Panc1 (cell line): ENCODE measurements at regions of chr19 and their contacts with region 1.

Region 1: DNA sequence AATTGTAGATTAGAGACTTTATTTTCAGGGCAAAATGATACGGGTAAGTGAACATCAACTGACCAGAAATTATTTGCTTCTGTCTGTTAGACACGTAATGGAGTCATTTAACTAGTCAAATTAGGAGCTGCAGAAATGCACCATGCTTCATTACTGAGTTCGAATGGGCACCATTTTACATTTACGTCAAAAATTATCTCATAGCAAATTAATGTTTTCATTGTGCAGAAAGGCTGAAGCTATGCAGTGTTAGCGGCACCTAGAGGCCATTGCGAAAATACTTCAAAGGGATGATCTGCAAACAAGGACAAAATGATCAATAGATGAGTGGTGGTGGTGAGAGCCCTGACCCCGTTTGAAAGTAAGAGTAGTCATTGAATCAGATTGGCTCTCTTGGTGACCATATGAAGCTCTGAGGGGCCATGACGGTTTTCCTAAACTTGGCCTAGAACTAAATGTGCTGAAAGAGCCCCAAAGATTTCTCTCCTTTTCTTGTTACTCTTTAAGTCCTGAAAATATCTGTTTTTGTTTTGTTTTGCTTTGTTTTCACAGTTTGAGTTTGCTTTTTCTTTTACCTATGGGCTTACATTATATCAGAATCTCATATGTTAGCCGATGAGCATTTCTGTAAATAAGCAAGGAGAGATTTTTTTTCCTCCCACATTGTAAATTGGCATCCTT is 277.9 kb downstream of the ZNF536 start:
- DNase-seq: peak; percentile 38
- ATAC-seq: peak; percentile 80; the same call in 1 of the 2 replicates
- H3K4me3 ChIP-seq: no peak overlapping the region
- H3K27ac ChIP-seq: no peak overlapping the region
- H3K4me1 ChIP-seq: no peaks in the 10 kb centered on the region
- H3K27me3 ChIP-seq: peaks cover 49% of the 10 kb centered on the region
- CTCF ChIP-seq: peak; percentile 94

Region 2: GRCh38 chr19:29735800-29736199 is 914.3 kb before region 1 on chr19:
- CTCF ChIA-PET with region 1: no interaction called
- POLR2A ChIA-PET with region 1: no interaction called
- in situ Hi-C with region 1: no loop called
- intact Hi-C with region 1: loop called (anchors 10 kb)
- DNase-seq: no peak
- ATAC-seq: no peak
- H3K4me3 ChIP-seq: no peak overlapping the region
- H3K27ac ChIP-seq: no peak overlapping the region
- H3K4me1 ChIP-seq: no peaks in the 10 kb centered on the region
- H3K27me3 ChIP-seq: 0 out of 2 replicates have a peak, but pooled peaks cover 6% of the 10 kb centered on the region
- CTCF ChIP-seq: no peak

Region 3: DNA sequence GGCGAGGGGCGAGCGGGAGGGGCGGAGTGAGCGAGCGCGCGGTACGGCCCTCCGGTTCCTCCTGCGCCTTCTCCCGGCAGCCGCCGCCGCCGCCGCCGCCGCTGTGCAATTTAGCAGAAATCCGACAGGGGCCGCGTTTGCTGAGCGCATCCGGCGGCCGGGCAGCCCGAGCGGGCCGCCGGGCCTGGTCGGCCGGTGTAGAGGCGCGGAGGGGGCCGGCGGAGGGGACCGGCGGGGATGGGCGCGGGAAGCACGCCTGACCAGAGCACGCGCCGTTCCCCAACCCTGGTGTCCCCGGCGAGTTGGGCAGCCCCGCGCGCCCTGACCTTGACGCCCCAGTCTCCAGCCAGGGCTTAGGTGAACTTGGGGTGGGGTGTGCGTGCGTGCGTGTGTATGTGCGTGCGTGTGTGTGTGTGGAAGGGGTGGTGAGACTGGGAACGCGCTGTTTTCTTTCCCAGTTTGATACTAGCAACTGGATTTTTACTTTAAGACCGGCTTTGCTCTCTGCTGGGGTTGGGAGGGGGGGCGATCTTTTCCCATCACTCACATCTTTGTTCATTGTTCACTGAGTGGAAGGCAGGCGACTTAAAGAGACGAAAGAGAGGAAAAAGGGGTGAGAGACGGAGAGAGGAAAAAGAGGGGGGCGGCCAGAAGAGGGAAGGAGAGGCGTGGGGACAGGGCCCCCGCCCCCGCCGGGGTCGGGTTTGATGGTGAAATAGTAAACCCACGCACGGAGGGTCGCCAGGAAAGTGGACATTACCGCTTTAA is 422.2 kb before region 1 on chr19:
- CTCF ChIA-PET with region 1: no interaction called
- POLR2A ChIA-PET with region 1: no interaction called
- in situ Hi-C with region 1: no loop called
- intact Hi-C with region 1: loop called (anchors 5 kb)
- DNase-seq: no peak
- ATAC-seq: peak; percentile 91
- H3K4me3 ChIP-seq: peak overlapping the region; percentile 46 to 73
- H3K27ac ChIP-seq: no peak overlapping the region
- H3K4me1 ChIP-seq: peaks cover 15% of the 10 kb centered on the region
- H3K27me3 ChIP-seq: peaks cover 19% of the 10 kb centered on the region
- CTCF ChIP-seq: peak; percentile 94

Region 4: DNA sequence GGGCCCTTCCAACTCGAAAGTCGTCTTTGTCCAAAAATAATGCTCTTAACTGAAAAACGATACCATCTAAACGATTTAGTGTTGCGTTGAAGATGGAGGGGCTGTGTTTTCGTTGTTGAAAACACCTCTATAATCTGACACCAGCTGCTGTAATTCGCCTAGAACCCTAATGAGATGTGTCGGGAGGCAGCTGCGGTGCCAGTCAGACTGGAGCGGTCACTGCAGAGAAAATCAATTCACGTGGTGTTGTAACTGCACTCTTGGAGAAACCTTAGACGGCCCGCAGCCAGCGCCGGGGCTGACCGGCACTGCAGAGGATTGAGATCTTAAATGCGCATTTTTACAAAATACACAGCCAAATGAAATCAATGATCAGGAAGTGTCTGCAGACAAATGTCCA is 61.2 kb after region 1 on chr19:
- CTCF ChIA-PET with region 1: no interaction called
- POLR2A ChIA-PET with region 1: no interaction called
- in situ Hi-C with region 1: no loop called
- intact Hi-C with region 1: no loop called
- DNase-seq: no peak
- ATAC-seq: no peak
- H3K4me3 ChIP-seq: no peak overlapping the region
- H3K27ac ChIP-seq: no peak overlapping the region
- H3K4me1 ChIP-seq: no peaks in the 10 kb centered on the region
- H3K27me3 ChIP-seq: peaks cover 11% of the 10 kb centered on the region
- CTCF ChIP-seq: no peak